ENCODE measurements at regions of chr6 and their contacts with region 1.

Region 1: GRCh38 chr6:43702534-43703440 is 15.2 kb upstream of the MRPS18A start:
- DNase-seq: peak; percentile 93 to 97 (median 95)
- ATAC-seq: peak; percentile 96 to 98 (median 98)
- H3K4me3 ChIP-seq: peak overlapping the region in 1 of 12 donors; percentile 18
- H3K27ac ChIP-seq: peak overlapping the region; percentile 75 to 93 (median 90)
- H3K4me1 ChIP-seq: peaks cover 11 to 82% (median 50%) of the 10 kb centered on the region in 12 donors
- H3K27me3 ChIP-seq: no peaks in the 10 kb centered on the region
- CTCF ChIP-seq: no peak
- POLR2A ChIP-seq: peak in 1 of 2 donors; percentile 63

Region 2: DNA sequence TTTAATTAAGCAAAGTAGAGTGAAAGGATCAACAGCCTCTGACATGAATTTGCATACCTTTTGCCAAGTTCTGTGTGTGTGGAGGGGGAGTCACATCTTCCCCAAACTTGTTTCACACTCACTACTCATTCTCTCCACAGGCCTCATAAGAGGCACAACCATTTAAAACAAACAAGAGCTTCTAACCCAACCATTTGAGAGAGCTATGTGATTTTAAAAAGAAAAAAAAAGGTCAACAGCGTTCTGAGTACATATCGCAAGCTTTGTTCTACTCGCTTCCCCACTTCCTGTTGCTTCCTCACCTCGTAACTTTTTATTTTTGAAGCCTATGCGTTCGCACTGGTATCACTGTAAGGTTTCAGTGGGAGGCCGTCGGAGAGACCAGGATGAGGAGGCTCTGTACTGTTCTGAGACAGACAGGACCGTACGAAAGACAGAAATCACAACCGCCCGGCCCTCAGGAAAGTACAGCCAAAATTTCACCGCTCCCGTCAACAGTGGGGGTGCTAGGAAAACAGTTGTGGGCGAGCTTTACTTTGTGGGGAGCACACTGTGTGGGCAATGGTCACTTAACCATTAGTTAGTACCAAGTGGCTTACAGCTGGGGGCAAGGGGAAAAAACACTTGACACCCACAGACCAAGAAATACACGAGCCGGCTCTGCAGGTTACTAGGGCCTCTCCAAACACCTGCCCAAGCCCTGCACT is 1312.4 kb before region 1 on chr6:
- intact Hi-C with region 1: no loop called
- DNase-seq: no peak
- ATAC-seq: peak in 2 of 4 donors; percentile 16 to 42
- H3K4me3 ChIP-seq: no peak overlapping the region
- H3K27ac ChIP-seq: peak overlapping the region in 1 of 12 donors; percentile 83
- H3K4me1 ChIP-seq: peaks cover 0 to 67% (median 0%) of the 10 kb centered on the region in 12 donors
- H3K27me3 ChIP-seq: no peaks in the 10 kb centered on the region
- CTCF ChIP-seq: no peak
- POLR2A ChIP-seq: no peak

Region 3: GRCh38 chr6:43714311-43715055 is 11.7 kb after region 1 on chr6:
- intact Hi-C with region 1: loop called in 1 of 10 experiments (anchors 2 kb)
- DNase-seq: peak in 2 of 5 donors; percentile 51 to 69
- ATAC-seq: peak in 2 of 4 donors; percentile 12 to 19
- H3K4me3 ChIP-seq: no peak overlapping the region
- H3K27ac ChIP-seq: peak overlapping the region in 6 of 12 donors; percentile 22 to 86 (median 34)
- H3K4me1 ChIP-seq: peaks cover 3 to 59% (median 28%) of the 10 kb centered on the region in 12 donors
- H3K27me3 ChIP-seq: no peaks in the 10 kb centered on the region
- CTCF ChIP-seq: no peak
- POLR2A ChIP-seq: no peak

Measured in heart left ventricle (tissue), 16 donors.